ENCODE measurements at regions of chr2 and their contacts with region 1.

Region 1: DNA sequence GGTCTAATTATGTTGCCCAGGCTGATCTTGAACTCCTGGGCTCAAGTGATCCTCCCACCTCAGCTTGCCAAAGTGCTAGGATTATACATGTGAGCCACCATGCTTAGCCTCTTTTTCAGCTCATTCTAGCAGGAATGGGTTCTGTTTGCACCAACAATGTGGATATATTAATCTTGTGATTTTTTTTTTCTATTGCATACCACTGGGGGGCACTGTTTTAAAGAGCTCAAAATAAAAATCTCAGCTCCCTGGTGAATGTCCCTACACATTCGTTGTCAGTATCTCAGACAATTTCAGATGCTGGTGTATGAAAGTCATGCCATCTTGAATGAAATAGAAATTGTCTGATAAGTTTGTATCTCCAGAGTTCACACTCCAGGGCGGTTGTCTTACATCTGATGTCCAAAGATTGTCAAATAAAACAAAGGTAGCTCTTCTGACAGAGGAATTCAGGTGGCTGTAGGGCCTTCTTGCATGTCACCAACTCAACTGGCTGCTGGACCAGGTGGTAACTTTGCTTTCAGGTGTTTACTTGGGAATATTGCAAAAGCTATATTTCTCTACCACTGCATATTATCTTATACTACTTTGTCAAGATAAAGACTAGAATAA is 3.1 kb upstream of the MATN3 start:
- DNase-seq: peak; percentile 61
- CTCF ChIP-seq: peak; percentile 26

Region 2: DNA sequence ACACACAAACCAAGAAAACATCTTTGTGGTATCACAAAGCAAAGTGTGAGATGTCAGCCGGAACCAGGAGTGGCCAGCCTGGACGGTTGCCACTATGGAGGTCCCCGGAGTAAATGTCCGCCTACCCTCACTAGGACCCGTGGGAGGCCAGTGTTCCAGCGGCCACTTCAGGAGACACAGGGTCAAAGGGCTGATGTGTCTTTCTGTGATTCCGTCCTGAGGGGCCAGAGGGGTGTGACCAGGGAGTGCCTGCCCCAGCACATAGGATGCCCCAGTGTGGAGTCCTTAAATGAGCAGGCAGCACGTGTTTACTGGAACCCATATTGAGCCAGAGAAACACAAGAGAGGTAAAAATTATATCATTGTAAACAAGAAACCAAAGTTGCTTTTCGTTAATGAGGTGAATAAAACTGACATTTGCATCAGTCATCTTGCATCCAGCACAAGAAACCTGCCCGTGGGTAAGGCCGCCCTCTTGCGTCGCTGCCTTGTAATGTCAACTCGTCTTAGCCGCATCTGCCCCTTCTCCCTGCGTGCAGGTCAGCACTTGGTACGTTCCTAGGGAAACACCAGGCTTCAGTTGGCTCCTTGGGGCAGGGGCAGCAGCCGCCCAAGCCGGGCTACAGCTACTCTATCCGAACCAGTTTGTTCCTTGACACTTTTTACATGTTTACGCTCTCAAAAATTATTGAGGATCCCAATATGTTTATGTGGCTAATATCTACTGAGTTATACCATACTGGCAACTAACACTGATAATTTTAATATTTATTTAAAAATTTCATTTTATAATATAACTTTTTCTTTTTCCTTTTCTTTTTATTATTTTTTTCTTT is 82.5 kb after region 1 on chr2:
- in situ Hi-C with region 1: loop called (anchors 10 kb)
- DNase-seq: peak; percentile 89
- CTCF ChIP-seq: peak; percentile 80

Region 3: GRCh38 chr2:20326163-20326780 is 310.7 kb after region 1 on chr2:
- in situ Hi-C with region 1: no loop called
- DNase-seq: peak; percentile 62
- CTCF ChIP-seq: peak; percentile 77

Measured in GM13976 (cell line).